Activated naive CD4-positive, alpha-beta T cell treated with anti-CD3 and anti-CD28 coated beads, Interleukin-2, amount 10 ng/mL, durations not matched to agents 7 days and 5 days (primary cell): ENCODE measurements at regions of chr20 and their contacts with region 1.

Region 1: DNA sequence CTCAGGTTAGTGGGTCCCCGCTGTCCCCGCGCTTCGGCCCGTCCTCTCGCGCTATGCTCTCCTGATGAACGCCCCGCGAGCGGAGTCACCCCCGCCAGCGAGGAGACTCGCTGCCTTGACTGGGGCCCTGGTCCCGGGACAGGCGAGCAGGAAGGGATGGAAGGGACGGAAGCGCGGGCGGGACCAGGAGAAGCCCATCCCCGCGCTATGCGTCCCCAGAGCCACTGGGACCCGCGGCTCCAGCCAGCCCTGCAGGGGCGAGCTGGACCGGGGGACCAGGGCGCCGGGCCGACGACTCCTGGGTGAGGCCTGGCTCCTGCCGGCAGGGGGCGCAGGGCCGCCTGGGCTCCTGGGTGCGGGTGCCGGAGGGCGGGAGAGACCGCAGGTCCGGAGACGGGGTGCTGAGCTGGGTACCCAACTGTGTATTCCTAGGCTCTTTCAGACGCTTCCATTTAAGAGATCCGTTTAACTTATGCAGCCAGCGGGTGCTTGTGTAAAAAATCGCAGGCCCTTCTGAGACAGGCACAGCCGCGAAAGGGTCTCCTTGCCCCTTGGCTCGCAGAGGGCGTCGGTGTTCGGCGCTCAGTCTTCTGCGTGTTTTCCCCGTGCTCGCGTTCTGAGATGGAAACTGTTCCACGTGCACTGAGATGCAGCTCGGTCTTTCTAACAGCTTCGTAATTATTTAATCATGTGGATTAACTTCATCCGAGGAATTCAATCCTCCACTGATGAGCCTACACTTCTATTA is 586 bp upstream of the SYCP2 start:
- DNase-seq: peak; percentile 80
- H3K4me3 Mint-ChIP-seq: peak overlapping the region; percentile 70
- H3K27ac Mint-ChIP-seq: peak overlapping the region; percentile 26
- H3K4me1 Mint-ChIP-seq: peaks cover 33% of the 10 kb centered on the region
- H3K27me3 Mint-ChIP-seq: no peaks in the 10 kb centered on the region

Region 2: DNA sequence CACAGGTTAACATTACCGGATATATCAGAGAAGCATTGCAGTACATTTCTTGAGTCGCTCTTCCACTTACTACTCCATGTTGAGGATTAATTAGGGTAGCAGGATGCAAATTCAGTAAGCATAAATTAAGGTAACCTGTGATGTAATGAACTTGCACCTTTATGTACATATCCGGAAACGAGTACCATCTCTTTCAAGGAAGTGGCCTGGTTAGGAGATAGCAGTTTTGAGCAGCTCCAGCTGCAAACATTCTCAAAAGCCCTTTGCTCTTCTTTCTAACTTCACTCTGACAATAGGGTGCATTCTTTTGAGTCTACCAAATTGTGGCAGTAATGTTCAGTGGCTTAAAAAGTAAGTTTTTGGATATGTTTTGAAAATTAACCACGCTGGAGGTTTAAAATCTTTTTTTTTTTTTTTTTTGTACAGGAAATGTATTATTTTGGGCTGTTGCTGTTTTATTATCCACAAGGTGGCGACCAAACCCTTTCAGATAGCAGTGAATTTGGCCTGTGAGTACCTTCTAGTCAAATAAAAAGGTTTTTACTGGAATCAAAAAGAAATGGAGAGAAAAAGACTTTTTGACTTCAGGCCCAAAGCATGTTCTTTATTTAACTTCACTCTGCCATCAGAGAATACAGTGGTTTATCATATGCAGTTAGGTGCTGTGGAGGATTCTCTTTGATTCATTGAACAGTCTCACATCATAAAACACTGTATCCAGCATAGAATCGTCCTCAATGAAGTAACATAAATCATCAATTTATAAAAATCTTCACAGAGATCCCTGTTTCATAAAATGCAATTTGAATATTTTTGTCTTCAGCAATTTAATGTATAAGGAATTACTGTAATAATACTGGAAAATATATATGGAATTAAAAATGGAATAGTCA is 15.1 kb after region 1 on chr20:
- CTCF ChIA-PET with region 1: interaction called, 16 read pairs
- DNase-seq: peak; percentile 52
- H3K4me3 Mint-ChIP-seq: peak overlapping the region; percentile 42
- H3K27ac Mint-ChIP-seq: peak overlapping the region; percentile 95
- H3K4me1 Mint-ChIP-seq: peaks cover 33% of the 10 kb centered on the region
- H3K27me3 Mint-ChIP-seq: no peaks in the 10 kb centered on the region